ENCODE measurements at regions of chr14 and their contacts with region 1.

Region 1: GRCh38 chr14:54610051-54610977 is 43.4 kb downstream of the SAMD4A start:
- DNase-seq: no peak
- ATAC-seq: no peak

Region 2: DNA sequence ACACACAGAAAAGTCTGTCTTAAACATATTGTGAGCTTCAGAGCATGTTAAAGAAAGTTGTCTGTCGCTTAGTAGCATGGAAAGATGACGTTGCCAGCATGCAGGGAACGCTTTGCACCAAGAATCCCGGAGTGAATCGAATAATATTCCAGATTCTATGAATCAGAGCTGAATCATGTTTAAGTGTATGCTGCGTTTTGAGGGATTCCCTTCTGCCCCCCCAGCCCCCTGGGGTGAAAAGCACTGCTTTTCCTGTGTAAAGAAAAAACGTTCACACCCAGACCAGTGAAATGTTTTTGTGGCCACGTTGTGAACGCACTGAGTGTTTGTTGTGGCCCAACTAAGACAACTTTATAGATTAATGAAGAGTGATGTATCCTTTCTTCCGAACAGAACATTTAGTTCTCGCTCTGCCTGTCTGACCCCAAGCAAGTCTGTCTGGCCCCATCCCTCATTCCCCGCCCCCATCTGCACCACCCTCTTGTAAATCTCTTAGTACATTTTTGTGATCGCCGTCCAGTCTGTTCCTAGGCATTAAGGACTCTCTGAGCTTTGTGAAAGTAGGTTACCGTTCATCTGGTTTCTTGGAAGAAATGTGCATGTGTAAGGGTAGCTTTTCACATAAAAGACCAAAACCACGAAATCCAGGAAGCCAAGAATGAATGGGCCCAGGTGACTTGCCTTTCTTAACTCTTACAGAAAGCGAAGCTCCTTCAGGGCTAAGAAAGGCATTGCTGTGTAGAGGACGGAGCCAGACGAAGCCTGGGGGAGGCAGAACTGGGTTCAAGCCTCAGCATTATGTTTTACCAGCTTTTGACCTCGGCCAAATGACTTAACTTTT is 59.6 kb after region 1 on chr14:
- intact Hi-C with region 1: loop called in 1 of 2 experiments (anchors 5 kb)
- DNase-seq: no peak
- ATAC-seq: no peak

Measured in left cardiac atrium (tissue), 4 donors.